ENCODE measurements at regions of chr2 and their contacts with region 1.

Region 1: DNA sequence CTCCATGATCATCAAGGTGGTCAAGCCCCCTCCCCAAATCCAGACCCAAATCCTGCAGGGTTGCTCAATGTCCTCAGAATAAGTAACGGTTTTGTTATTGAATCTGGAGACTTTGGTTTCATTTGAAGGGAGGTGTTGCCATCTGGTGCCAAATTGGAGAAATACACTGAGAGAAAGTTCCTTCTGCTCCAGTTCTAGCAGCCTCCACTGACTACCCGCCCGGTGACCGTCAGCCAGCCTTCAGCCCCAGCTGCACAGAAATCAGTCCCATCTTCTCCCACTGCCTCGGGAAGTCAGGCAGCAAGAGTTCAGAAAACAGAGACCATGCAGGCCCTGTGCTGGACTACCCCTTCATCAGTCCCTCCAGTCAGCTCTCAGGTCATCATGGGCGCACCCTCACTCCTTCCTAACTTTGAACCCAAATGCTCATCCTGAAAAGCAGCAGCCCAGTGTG is 38.7 kb downstream of the PKDCC start:
- DNase-seq: peak in 40 of 42 donors; percentile 35 to 87 (median 64)

Region 2: DNA sequence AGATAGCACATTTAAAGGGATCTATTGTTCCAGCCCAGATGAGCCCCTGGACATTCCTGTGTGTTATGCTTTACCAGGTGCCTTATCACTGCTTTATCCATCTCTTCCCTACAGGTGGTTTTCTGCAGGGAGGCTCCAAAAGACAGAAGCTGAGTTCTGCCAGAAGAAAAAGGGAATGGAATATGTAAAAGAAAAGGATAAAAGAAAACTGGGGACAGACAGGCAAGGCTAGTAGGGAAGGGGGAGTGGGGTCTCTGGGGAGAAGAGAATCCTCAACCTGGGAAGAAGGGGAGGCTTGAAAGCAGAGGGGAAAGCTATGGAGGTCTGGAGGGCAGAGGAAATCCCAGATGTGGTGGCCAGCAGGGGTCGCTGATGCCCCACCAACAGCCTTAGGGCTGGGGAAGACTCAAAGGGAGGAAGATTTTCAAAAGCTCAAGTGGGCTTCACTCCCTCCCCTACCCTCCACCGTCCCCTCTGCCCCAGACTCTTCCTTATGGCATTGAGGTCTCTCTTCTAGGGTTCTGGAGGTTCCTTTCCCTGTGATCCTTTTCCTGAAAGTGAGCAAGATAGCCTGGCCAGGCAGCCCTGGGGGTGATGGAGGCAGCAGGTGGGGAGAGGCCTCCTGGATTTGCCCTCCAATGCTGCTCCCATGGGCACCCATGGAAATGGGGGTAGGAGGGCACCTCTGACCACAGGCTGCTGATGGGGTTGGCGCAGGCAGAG is 216.8 kb before region 1 on chr2:
- intact Hi-C with region 1: loop called (anchors 1 kb)
- DNase-seq: peak in 41 of 42 donors; percentile 70 to 93 (median 87)

Region 3: DNA sequence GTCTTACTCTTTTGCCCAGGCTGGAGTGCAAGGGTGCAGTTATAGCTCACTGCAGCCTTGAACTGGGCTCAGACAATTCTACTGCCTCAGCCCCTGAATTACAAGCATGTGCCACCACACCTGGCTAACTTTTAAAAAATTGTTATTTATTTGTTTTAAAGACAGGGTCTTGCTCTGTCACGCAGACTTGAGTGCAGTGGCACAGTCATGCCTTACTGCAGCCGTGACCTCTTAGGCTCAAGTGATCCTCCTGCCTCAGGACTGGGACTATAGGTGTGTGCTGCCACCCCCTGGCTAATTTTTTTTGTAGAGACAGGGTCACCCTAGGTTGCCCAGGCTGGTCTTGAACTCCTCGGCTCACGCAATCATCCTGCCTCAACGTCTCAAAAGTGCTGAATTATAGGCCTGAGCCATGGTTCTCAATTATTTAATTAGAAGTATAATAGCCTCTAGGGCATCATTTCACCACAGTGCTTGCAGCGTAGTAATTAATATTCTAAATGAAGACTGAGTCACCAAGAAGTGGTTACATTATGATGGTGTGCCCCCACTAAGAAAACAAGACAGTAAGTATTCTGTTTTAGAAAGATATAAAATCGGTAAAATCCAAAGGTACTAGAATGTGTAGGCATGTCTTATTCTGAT is 152.2 kb after region 1 on chr2:
- intact Hi-C with region 1: no loop called
- DNase-seq: peak in 26 of 42 donors; percentile 17 to 70 (median 34)

Measured in head of caudate nucleus (tissue), 42 donors.